Activated CD4-positive, alpha-beta T cell treated with anti-CD3 and anti-CD28 coated beads, Interleukin-2, amount 10 ng/mL, durations not matched to agents 24 days and 14 days (primary cell): ENCODE measurements at regions of chr18 and their contacts with region 1.

Region 1: DNA sequence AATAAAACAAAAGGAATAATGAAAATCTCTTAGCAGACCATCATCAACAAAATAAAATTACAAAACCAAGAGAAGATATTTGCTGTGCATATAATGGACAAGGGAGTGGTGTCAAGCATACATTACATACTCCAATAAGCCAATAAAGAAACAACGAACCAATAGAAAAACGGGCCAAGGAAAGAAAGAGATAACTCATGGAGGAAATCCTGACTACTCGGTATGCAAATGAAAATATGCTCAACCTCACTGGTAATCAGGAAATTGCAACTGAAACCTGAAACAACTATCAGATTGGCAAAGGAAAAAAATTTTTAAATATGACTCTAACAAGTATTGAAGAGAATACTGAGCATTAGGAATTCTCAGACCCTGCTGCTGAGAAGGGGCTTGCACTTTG is 84.7 kb downstream of the BCL2 start:
- DNase-seq: no peak
- H3K4me3 Mint-ChIP-seq: peak overlapping the region; percentile 65
- H3K27ac Mint-ChIP-seq: peak overlapping the region; percentile 91
- H3K4me1 Mint-ChIP-seq: peaks cover 70% of the 10 kb centered on the region
- H3K27me3 Mint-ChIP-seq: no peaks in the 10 kb centered on the region

Region 2: DNA sequence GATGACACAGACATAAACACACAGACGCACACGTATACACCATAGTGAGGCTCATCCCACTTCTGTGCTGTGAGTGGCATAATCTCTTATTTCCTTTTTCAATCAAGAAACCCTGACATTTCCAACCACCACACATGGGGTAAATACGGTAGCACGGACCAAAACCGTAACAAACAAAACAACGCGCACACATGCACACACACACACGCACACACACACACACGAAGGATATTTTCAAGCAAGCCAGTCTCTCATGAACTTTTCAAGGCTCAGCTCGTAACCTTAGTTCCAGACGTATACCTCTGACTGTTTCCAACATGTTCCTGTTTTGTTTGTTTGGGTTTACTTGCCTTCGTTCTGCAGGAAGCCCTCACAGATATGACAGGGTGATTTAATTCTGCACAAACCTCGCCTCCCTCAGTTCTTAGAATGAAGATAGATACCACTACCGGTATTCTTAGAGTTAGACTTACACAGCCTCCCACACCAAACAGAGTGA is 35.0 kb before region 1 on chr18:
- intact Hi-C with region 1: loop called (anchors 1 kb)
- DNase-seq: peak; percentile 90
- H3K4me3 Mint-ChIP-seq: no peak overlapping the region
- H3K27ac Mint-ChIP-seq: no peak overlapping the region
- H3K4me1 Mint-ChIP-seq: peaks cover 31% of the 10 kb centered on the region
- H3K27me3 Mint-ChIP-seq: no peaks in the 10 kb centered on the region

Region 3: DNA sequence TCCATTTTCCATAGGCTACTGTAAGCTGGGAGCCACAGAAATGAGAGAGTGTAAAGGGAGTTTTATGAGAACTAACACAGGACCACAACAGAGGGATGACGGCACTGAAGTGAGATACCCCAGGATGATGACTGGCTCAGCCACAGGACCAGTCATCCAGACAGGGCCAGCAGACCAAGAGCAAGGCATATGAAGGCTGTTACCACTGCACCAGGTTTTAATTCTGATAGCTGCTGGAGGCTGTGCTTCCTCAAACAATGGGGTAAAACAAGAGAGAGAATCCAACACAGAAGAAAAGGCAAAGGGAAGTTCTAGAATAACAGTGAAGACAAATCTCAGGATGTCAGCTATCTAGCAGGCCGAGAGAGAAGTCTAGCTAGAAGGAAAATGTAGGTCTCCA is 10.2 kb before region 1 on chr18:
- intact Hi-C with region 1: loop called (anchors 1 kb)
- DNase-seq: peak; percentile 74
- H3K4me3 Mint-ChIP-seq: peak overlapping the region; percentile 52
- H3K27ac Mint-ChIP-seq: peak overlapping the region; percentile 85
- H3K4me1 Mint-ChIP-seq: peaks cover 62% of the 10 kb centered on the region
- H3K27me3 Mint-ChIP-seq: no peaks in the 10 kb centered on the region

Region 4: DNA sequence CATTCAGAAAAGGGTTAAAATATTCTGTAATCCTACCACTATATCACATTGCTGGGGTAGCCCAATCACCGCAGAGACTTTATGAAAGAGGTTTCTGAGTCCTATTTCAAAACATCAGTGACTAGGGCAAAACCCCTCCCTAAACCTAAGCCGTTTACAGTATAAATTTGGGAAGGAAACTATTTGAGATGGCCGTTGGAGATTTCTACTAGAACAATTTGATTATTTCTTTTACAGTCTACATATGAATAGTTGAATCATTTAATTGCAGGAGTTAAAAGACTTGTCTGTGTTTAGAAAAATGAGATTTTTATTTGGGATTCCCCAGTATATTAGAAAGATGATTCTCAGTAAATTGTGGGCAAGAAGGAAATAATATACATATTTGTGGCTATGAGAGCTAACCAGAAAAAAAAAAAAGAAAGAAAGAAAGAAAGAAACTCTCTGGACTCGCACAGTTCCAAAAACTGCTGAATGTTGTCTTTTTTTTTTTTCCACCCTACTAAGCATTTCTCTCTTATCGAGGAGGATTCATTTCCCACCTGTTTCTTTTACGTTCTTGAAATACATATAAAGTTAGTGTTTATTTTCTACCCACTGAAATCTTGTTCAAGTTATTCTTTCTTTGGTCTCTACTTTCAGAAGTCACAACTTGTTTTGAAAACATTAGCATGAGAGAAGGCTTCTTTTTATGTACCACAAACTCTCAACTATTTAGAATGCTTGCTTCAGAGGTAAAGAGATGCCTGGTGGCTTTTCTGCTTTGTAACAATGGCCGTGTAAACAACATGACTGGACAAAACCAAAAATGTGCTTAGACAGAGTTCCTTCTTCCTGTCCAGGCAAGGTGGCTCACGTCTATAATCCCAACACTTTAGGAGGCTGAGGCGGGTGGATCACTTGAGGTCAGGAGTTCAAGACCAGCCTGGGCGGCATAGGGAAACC is 18.9 kb after region 1 on chr18:
- intact Hi-C with region 1: loop called (anchors 2 kb)
- DNase-seq: no peak
- H3K4me3 Mint-ChIP-seq: peak overlapping the region; percentile 29
- H3K27ac Mint-ChIP-seq: peak overlapping the region; percentile 64
- H3K4me1 Mint-ChIP-seq: peaks cover 68% of the 10 kb centered on the region
- H3K27me3 Mint-ChIP-seq: no peaks in the 10 kb centered on the region

Region 5: GRCh38 chr18:63299837-63300745 is 65.2 kb after region 1 on chr18:
- intact Hi-C with region 1: loop called (anchors 2 kb)
- DNase-seq: peak; percentile 81
- H3K4me3 Mint-ChIP-seq: peak overlapping the region; percentile 81
- H3K27ac Mint-ChIP-seq: peak overlapping the region; percentile 98
- H3K4me1 Mint-ChIP-seq: peaks cover 81% of the 10 kb centered on the region
- H3K27me3 Mint-ChIP-seq: no peaks in the 10 kb centered on the region

Region 6: DNA sequence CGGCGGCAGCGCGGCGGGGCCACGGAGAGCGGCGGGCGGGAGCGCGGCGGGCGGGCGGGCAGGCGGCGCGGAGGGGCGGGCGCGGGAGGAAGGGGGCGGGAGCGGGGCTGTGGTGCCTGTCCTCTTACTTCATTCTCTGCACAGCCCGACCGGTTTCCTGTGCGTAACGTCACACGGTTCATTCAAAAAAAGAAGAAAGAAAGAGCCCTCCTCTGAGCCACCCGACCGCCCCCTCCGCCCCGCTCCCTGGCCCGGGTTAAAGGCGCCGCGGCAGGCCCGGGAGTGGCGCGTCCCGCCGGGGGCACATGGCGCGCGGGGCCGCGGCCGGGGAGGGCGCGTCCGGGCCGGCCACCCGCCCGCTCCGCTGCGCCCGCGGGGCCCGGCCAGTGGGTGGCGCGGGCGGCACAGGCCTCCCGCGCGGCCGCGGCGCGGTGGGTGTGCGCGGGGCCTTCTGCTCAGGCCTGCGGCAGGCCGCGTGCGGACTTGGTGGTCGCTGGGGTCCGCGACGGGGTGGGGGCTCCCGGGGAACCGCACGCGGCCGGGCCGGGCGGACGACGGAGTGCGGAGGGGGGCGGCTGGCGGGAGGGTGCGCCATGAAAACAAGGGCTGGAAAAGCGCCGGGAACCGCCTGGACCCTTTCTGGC is 85.3 kb after region 1 on chr18:
- intact Hi-C with region 1: no loop called
- DNase-seq: peak; percentile 96
- H3K4me3 Mint-ChIP-seq: peak overlapping the region; percentile 99
- H3K27ac Mint-ChIP-seq: peak overlapping the region; percentile 97
- H3K4me1 Mint-ChIP-seq: peaks cover 25% of the 10 kb centered on the region
- H3K27me3 Mint-ChIP-seq: no peaks in the 10 kb centered on the region

Region 7: GRCh38 chr18:64244571-64244970 is 1009.7 kb after region 1 on chr18:
- intact Hi-C with region 1: no loop called
- DNase-seq: no peak
- H3K4me3 Mint-ChIP-seq: no peak overlapping the region
- H3K27ac Mint-ChIP-seq: no peak overlapping the region
- H3K4me1 Mint-ChIP-seq: no peaks in the 10 kb centered on the region
- H3K27me3 Mint-ChIP-seq: no peaks in the 10 kb centered on the region